GM13977 (cell line): ENCODE measurements at regions of chr5 and their contacts with region 1.

Region 1: DNA sequence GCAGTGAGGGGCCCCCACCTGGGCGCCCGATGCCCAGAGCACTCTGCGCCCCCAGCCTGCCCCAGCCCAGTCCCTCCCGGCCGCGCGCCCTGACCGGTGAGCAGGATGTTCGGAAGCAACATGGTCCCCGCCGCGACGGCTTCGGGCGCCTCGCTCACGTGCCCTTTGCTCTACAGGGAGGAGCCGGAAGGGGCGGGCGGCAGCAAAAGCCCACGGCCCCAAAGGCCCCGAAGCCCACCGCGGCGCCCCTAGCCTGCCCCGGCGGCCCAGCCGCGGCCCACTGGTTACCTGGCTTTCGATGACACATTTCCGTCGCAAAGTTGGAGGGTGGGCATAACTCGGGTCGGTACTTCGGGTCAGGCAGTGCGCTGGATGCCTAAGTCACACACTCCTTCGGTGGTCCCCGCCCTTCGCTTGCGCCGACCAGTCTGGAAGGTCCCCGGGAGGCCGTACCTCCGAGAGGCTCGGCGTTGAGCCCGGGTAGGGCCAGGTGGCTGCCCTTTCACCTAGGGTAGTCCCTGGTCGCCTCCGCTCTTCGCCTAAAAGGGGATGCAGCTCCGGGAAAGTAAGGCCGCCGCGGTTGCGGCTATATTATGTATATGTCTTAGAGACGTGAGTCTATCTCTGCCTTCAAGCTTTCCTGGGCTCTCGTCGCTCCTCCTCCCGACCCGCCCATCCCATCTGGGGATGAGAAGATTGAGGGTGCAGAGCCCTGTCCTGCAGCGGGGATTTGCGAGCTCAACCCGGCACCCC is at the starts of genes AK6, RAD17 and TAF9:
- DNase-seq: peak; percentile 90
- CTCF ChIP-seq: no peak

Region 2: DNA sequence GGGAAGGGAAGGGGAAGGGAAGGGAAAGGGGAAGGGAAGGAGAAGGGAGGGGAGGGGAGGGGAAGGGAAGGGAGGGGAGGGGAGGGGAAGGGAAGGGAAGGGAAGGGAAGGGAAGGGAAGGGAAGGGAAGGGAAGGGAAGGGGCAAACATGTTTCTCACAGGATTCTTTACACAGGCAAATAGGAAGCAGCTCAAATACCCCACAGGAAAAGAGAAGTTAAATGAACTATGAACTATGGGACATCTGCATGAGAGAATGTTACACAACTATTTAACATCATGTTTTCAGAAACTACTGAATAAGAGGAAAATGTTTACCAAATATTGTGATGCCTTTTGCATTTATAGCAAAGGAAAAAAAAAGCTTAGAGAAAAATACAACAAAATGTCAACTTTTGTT is 401.1 kb before region 1 on chr5:
- in situ Hi-C with region 1: no loop called
- DNase-seq: no peak
- CTCF ChIP-seq: no peak

Region 3: GRCh38 chr5:69093771-69094482 is 275.6 kb before region 1 on chr5 and contains the start of gene SLC30A5:
- in situ Hi-C with region 1: loop called (anchors 25 kb)
- DNase-seq: peak; percentile 96
- CTCF ChIP-seq: peak; percentile 89